CD14-positive monocyte (primary cell): ENCODE measurements at regions of chr1 and their contacts with region 1.

Region 1: DNA sequence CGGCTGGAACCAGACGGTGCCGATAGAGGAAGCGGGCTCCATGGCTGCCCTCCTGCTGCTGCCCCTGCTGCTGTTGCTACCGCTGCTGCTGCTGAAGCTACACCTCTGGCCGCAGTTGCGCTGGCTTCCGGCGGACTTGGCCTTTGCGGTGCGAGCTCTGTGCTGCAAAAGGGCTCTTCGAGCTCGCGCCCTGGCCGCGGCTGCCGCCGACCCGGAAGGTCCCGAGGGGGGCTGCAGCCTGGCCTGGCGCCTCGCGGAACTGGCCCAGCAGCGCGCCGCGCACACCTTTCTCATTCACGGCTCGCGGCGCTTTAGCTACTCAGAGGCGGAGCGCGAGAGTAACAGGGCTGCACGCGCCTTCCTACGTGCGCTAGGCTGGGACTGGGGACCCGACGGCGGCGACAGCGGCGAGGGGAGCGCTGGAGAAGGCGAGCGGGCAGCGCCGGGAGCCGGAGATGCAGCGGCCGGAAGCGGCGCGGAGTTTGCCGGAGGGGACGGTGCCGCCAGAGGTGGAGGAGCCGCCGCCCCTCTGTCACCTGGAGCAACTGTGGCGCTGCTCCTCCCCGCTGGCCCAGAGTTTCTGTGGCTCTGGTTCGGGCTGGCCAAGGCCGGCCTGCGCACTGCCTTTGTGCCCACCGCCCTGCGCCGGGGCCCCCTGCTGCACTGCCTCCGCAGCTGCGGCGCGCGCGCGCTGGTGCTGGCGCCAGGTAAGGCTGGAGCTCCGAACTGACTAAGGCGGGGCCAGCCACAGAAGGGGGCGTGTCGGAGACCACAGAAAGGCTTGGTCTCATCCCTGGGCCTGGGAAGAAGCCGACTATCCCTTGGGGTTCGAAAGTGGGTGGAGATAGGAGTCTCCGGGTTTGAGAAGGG is 486 bp downstream of the SLC27A3 start:
- DNase-seq: peak; percentile 60 to 72 (median 66)
- H3K4me3 ChIP-seq: peak overlapping the region; percentile 57 to 93 (median 72)
- H3K4me3 Mint-ChIP-seq: peak overlapping the region; percentile 83 to 91
- H3K27ac ChIP-seq: peak overlapping the region; percentile 92 to 93
- H3K27ac Mint-ChIP-seq: peak overlapping the region; percentile 69 to 99 (median 96)
- H3K4me1 ChIP-seq: peaks cover 60 to 62% of the 10 kb centered on the region in 2 donors
- H3K4me1 Mint-ChIP-seq: peaks cover 63% of the 10 kb centered on the region
- H3K27me3 ChIP-seq: no peaks in the 10 kb centered on the region
- H3K27me3 Mint-ChIP-seq: peaks cover 0 to 5% (median 0%) of the 10 kb centered on the region in 3 donors
- CTCF ChIP-seq: no peak

Region 2: GRCh38 chr1:153763365-153764225 is 12.1 kb before region 1 on chr1:
- intact Hi-C with region 1: no loop called
- DNase-seq: no peak
- H3K4me3 ChIP-seq: no peak overlapping the region
- H3K4me3 Mint-ChIP-seq: no peak overlapping the region
- H3K27ac ChIP-seq: no peak overlapping the region
- H3K27ac Mint-ChIP-seq: peak overlapping the region in 3 of 7 donors; percentile 12 to 31 (median 23)
- H3K4me1 ChIP-seq: peaks cover 6% of the 10 kb centered on the region in 2 donors
- H3K4me1 Mint-ChIP-seq: peaks cover 9% of the 10 kb centered on the region
- H3K27me3 ChIP-seq: no peaks in the 10 kb centered on the region
- H3K27me3 Mint-ChIP-seq: peaks cover 0 to 7% (median 0%) of the 10 kb centered on the region in 3 donors
- CTCF ChIP-seq: no peak

Region 3: DNA sequence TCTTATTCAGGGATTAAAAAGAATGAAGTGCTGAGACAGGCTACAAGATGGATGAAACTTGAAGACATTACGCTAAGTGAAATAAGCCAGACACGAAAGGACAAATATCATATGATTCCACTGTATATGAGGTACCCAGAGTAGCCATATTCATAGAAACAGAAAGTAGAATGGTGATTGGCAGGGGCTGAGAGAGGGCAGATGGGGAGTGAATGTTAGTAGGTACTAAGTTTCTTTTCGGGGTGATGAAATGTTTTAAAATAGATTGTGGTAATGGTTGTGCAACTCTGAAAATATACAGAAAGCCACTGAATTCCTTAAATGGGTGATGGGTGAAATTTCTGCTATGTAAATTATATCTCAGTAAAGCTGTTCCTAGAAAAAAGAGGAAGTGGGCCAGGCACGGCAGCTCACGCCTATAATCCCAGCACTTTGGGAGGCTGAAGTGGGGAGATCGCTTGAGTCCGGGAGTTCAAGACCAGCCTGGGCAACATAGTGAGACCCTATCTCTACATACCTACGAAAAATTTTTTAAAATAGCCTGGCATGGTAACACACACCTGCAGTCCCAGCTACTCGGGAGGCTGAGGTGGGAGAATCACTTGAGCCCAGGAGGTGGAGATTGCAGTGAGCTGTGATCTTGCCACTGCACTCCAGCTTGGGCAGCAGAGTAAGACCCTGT is 15.4 kb after region 1 on chr1:
- intact Hi-C with region 1: loop called in 1 of 2 experiments (anchors 2 kb)
- DNase-seq: peak; percentile 91 to 98 (median 95)
- H3K4me3 ChIP-seq: peak overlapping the region; percentile 25 to 70 (median 29)
- H3K4me3 Mint-ChIP-seq: peak overlapping the region; percentile 73 to 89
- H3K27ac ChIP-seq: peak overlapping the region; percentile 88 to 97
- H3K27ac Mint-ChIP-seq: peak overlapping the region; percentile 98 to 100 (median 99)
- H3K4me1 ChIP-seq: peaks cover 40 to 43% of the 10 kb centered on the region in 2 donors
- H3K4me1 Mint-ChIP-seq: peaks cover 45% of the 10 kb centered on the region
- H3K27me3 ChIP-seq: no peaks in the 10 kb centered on the region
- H3K27me3 Mint-ChIP-seq: peaks cover 1 to 5% (median 5%) of the 10 kb centered on the region in 3 donors
- CTCF ChIP-seq: no peak

Region 4: GRCh38 chr1:153880962-153881361 is 105.3 kb after region 1 on chr1:
- intact Hi-C with region 1: no loop called
- DNase-seq: peak; percentile 62 to 92 (median 68)
- H3K4me3 ChIP-seq: no peak overlapping the region
- H3K4me3 Mint-ChIP-seq: no peak overlapping the region
- H3K27ac ChIP-seq: peak overlapping the region in 1 of 2 donors; percentile 52
- H3K27ac Mint-ChIP-seq: no peak overlapping the region
- H3K4me1 ChIP-seq: peaks cover 18% of the 10 kb centered on the region in 2 donors
- H3K4me1 Mint-ChIP-seq: peaks cover 2% of the 10 kb centered on the region
- H3K27me3 ChIP-seq: no peaks in the 10 kb centered on the region
- H3K27me3 Mint-ChIP-seq: peaks cover 0 to 3% (median 0%) of the 10 kb centered on the region in 3 donors
- CTCF ChIP-seq: no peak